Activated naive CD4-positive, alpha-beta T cell treated with anti-CD3 and anti-CD28 coated beads for 36 hours (primary cell): ENCODE measurements at regions of chr3 and their contacts with region 1.

Region 1: DNA sequence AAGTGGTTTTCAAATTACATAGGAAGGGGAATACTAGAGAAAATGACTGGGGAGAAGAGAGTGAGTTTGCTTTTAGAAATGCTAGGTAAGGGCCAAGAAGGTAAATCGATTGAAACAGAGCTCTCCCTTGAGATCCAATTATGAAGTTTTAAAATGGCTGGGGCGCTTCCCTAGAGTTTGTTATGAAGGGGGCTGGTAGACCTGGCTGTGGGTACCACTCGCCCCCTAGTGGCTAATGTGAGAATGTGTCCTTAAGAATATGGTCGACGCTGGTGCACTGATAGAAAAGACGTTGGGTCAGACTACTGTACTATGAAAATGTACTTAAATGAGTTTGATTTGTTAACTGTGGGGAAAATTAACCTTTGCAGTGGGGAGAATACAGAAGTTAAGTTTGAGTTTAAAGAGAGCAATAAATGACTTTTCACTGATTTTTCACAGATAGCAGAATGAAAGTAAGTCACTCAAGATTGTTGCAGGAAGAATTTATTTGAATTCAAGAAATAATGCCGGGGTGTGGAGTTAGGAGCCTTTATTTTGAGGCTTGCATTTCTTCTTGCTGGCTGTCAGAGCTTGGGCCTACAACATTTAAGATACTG is 9.2 kb downstream of the TMPRSS7 start:
- DNase-seq: peak; percentile 64
- H3K4me3 Mint-ChIP-seq: no peak overlapping the region
- H3K27ac Mint-ChIP-seq: no peak overlapping the region
- H3K4me1 Mint-ChIP-seq: peaks cover 3% of the 10 kb centered on the region
- H3K27me3 Mint-ChIP-seq: no peaks in the 10 kb centered on the region

Region 2: GRCh38 chr3:111717601-111718000 is 326.1 kb before region 1 on chr3:
- CTCF ChIA-PET with region 1: interaction called, 14 read pairs
- intact Hi-C with region 1: loop called (anchors 1 kb)
- DNase-seq: peak; percentile 83
- H3K4me3 Mint-ChIP-seq: no peak overlapping the region
- H3K27ac Mint-ChIP-seq: no peak overlapping the region
- H3K4me1 Mint-ChIP-seq: no peaks in the 10 kb centered on the region
- H3K27me3 Mint-ChIP-seq: no peaks in the 10 kb centered on the region

Region 3: GRCh38 chr3:111859974-111860859 is 183.5 kb before region 1 on chr3:
- CTCF ChIA-PET with region 1: interaction called, 3 read pairs
- intact Hi-C with region 1: loop called (anchors 1 kb)
- DNase-seq: peak; percentile 75
- H3K4me3 Mint-ChIP-seq: peak overlapping the region; percentile 84
- H3K27ac Mint-ChIP-seq: no peak overlapping the region
- H3K4me1 Mint-ChIP-seq: peaks cover 10% of the 10 kb centered on the region
- H3K27me3 Mint-ChIP-seq: peaks cover 45% of the 10 kb centered on the region

Region 4: GRCh38 chr3:111895079-111895478 is 148.6 kb before region 1 on chr3:
- CTCF ChIA-PET with region 1: no interaction called
- intact Hi-C with region 1: loop called (anchors 1 kb)
- DNase-seq: no peak
- H3K4me3 Mint-ChIP-seq: no peak overlapping the region
- H3K27ac Mint-ChIP-seq: no peak overlapping the region
- H3K4me1 Mint-ChIP-seq: no peaks in the 10 kb centered on the region
- H3K27me3 Mint-ChIP-seq: peaks cover 2% of the 10 kb centered on the region

Region 5: DNA sequence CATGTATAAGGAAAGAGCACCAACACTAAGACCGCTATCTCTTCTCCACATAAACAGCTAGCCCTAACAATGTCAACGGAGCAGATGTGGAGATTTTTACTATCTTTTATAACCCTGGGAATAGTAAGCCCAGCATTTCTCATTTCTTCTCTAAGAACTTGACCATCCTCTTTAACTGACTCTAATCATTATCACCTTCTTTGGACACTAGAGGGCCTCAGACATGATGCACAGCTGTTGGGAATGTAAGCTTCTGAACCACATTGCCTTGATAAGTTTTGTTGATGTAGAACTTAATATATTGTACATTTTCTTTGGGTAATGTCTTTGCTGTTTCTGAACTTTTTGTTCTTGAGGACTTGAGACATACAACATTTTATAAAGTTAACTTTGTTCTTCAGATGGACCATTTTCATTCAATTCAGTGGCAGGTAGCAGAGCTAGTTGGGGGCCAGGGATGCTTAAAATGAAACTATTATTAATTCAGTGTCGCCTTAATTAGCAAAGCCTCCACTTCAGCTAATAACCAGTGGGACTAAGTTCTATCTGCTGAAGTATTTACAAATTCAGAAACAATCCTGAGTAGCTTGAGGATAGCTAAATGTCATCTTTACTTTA is 54.5 kb before region 1 on chr3:
- CTCF ChIA-PET with region 1: interaction called, 24 read pairs
- intact Hi-C with region 1: loop called (anchors 1 kb)
- DNase-seq: no peak
- H3K4me3 Mint-ChIP-seq: no peak overlapping the region
- H3K27ac Mint-ChIP-seq: no peak overlapping the region
- H3K4me1 Mint-ChIP-seq: peaks cover 27% of the 10 kb centered on the region
- H3K27me3 Mint-ChIP-seq: no peaks in the 10 kb centered on the region

Region 6: GRCh38 chr3:111998636-111999483 is 44.8 kb before region 1 on chr3 and contains the start of gene TAGLN3:
- CTCF ChIA-PET with region 1: interaction called, 6 read pairs
- intact Hi-C with region 1: loop called (anchors 1 kb)
- DNase-seq: peak; percentile 20
- H3K4me3 Mint-ChIP-seq: peak within 1 kb of the TSS; percentile 64
- H3K27ac Mint-ChIP-seq: no peak within 1 kb of the TSS
- H3K4me1 Mint-ChIP-seq: peaks cover 45% of the 10 kb centered on the region
- H3K27me3 Mint-ChIP-seq: no peaks in the 10 kb centered on the region
- total RNA-seq, gene TAGLN3: 1.2 TPM

Region 7: DNA sequence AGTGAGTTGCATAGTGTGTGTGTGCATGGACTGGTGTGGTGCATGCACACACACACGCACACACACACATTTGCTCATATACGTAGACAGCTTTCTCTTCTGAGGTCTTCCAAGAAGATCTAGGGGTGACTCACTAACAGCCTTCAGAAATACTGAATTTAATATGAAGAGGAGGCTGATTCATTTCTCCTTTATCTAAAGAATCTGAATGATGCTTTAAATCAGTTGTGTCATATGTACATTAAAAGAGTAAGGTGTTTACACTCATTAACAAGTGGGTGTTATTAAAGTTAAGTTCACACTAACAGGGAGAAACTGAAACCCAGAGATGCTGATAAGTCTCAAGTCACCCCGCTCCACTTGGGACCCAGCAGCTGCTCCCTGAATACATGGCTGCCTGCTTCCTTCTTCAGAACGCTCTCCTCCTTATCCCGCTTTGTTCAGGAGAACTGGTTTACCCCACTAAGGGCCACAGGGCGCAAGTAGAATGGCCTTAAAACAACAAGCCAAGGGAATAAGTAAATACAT is 12.8 kb after region 1 on chr3:
- CTCF ChIA-PET with region 1: interaction called, 24 read pairs
- intact Hi-C with region 1: no loop called
- DNase-seq: peak; percentile 42
- H3K4me3 Mint-ChIP-seq: no peak overlapping the region
- H3K27ac Mint-ChIP-seq: peak overlapping the region; percentile 26
- H3K4me1 Mint-ChIP-seq: peaks cover 12% of the 10 kb centered on the region
- H3K27me3 Mint-ChIP-seq: peaks cover 2% of the 10 kb centered on the region